Aorta (tissue), 5 donors: ENCODE measurements at regions of chr17 and their contacts with region 1.

Region 1: DNA sequence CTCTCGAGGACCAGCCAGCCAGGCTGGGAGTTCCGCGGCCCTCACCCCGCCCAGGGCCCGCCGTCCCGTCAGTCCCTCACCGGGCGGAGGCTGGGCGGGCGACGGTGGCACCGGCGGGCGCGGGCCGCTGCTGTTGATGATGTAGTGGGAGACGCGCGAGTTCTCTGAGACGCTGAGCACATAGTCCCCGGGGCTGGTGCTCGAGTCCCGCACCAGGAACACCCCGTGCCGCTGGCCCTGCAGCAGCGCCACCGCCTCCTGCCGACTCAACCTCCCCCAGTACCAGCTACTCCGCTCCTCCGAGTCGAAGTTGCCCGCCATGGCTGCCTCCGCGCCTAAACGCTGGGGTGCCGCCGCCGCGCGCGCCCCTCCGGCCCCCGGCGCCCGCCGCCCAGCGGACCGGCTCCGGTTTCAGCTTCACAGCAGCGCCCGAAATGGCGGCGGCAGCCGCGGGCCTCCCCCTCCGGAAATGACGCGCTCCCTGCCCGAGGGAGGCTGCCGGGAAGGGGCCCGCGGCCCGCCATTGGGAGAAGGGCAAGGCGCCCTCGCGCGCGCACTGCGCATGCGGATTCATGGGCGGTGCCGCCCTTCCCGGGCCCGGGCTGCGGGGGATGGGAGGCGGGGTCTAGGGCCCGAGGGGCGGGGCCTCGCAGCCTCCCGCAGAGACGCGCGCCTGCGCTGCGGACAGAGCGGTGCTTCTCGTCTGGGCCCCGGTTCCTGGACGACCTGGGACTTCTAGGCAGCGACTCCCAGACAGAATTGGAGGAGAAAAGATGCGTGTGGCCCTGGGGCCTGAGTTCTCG is at the start of gene CRK:
- DNase-seq: peak; percentile 98 to 99
- ATAC-seq: peak; percentile 98
- H3K4me3 ChIP-seq: peak within 1 kb of the TSS; percentile 74 to 90
- H3K27ac ChIP-seq: peak within 1 kb of the TSS; percentile 73 to 90
- H3K4me1 ChIP-seq: peaks cover 3 to 4% of the 10 kb centered on the region in 2 donors
- H3K27me3 ChIP-seq: no peaks in the 10 kb centered on the region
- total RNA-seq, gene CRK: 55.3 to 63.8 TPM

Region 2: GRCh38 chr17:1365445-1366039 is 90.5 kb before region 1 on chr17:
- intact Hi-C with region 1: loop called (anchors 5 kb)
- DNase-seq: peak in 1 of 2 donors; percentile 61
- ATAC-seq: peak; percentile 89
- H3K4me3 ChIP-seq: no peak overlapping the region
- H3K27ac ChIP-seq: no peak overlapping the region
- H3K4me1 ChIP-seq: peaks cover under 1 to 5% of the 10 kb centered on the region in 2 donors
- H3K27me3 ChIP-seq: no peaks in the 10 kb centered on the region

Region 3: DNA sequence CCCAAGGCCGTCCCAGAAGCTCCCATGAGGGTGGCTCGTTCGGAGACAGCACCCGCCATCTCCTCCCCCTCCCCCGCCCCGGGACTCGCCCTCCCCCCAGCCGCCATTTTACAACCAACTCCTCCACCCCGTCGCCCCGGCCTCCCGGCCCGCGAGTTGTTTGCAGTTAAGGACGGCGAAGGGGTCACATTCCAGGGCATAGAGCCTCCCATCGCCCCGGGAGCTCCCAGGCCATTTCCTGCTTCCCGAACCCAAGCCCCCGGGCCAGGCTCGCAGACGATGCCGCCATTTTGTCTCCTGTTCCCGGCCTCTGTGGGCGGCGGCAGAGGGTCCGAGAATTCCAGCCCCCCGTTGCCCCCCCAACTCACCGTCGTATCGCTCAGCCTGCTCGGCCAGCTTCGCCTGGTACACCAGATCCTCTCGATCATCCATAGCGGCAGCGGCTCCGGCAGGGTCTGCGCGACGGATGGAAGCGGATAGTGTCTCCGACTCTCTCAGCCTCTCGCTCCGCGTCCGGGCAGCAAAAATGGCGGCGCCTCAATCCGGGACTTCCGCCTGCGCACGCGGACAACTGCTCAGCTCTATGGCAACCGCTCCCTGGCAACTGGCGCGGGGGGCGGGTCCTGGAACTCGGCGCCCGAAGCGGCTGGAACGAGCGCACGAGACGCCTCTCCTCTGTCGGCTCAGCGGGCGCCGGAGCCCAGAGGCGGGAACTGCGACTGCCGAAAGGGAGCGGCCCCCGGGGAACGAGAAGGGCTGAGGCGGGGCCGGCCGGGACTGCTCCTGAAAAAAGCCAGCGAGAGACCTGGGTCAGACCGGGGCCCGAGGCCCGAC is 56.1 kb before region 1 on chr17 and contains the start of gene YWHAE:
- intact Hi-C with region 1: loop called in 1 of 2 experiments (anchors 10 kb)
- DNase-seq: peak; percentile 98 to 99
- ATAC-seq: peak; percentile 98
- H3K4me3 ChIP-seq: peak within 1 kb of the TSS; percentile 78 to 87
- H3K27ac ChIP-seq: peak within 1 kb of the TSS; percentile 32 to 81
- H3K4me1 ChIP-seq: peaks cover 0 to 6% of the 10 kb centered on the region in 2 donors
- H3K27me3 ChIP-seq: no peaks in the 10 kb centered on the region
- total RNA-seq, gene YWHAE: 277 to 285 TPM

Region 4: DNA sequence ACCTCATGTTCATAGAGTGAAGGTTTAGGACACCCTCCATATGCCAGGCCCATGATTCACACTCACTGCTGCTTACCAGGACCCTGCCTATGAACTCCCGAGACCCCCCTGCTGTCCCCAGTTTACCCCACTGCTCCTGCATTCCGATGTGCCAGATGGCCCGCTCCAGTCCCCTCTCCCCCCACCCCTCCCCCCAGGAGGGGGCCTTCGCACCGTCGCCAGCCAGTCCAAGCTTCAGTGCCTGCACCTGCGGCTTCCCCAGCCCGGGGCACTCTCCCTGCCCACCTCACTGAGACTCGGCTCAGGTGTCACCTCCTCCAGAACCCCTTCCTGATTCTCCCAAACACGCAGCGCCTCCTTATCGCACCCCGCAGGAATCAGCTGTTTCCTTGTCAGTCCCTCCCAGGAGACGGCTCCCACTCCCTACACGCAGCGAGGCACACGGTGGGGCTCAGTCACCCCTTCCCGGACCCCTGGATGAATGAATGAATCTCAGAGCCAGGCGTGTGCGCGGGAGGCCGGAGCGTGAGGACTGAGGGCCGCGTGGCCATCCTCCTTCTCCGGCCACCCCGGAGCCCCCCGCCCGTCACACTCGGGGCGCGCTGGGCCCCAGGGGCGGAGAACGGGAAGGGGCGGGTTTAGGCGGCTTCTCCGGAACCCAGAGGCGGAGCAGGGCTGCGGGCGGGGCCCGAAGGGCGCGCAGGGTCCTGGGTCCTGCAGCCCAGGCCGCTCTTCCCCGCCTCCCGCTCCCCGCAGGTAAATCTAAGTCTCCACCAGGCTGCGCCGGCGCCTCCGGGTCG is 34.8 kb after region 1 on chr17:
- intact Hi-C with region 1: loop called in 1 of 2 experiments (anchors 2 kb)
- DNase-seq: peak; percentile 83 to 93
- ATAC-seq: no peak
- H3K4me3 ChIP-seq: peak overlapping the region; percentile 59 to 80
- H3K27ac ChIP-seq: peak overlapping the region; percentile 72 to 90
- H3K4me1 ChIP-seq: peaks cover 0 to 3% of the 10 kb centered on the region in 2 donors
- H3K27me3 ChIP-seq: no peaks in the 10 kb centered on the region

Region 5: GRCh38 chr17:1503699-1504098 is 47.7 kb after region 1 on chr17:
- intact Hi-C with region 1: no loop called
- DNase-seq: no peak
- ATAC-seq: no peak
- H3K4me3 ChIP-seq: no peak overlapping the region
- H3K27ac ChIP-seq: no peak overlapping the region
- H3K4me1 ChIP-seq: no peaks in the 10 kb centered on the region
- H3K27me3 ChIP-seq: no peaks in the 10 kb centered on the region